Mammary epithelial cell (primary cell): ENCODE measurements at regions of chr6 and their contacts with region 1.

Region 1: DNA sequence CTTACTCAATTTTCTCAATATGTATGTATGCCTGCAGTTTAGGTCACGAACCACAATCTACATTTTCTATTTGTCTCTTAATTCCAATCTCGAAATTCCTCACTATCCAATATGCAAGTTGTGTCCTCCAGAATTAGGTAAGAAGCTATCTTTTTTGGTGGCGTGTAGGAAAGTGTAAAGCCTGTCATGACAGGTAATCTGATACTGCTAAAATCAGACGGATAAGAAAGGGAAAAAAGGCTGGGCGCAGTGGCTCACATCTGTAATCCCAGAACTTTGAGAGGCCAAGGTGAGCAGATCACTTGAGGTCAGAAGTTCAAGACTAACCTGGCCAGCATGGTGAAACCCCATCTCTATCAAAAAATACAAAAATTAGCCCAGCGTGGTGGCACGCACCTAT is 185.3 kb downstream of the IBTK start:
- DNase-seq: no peak
- H3K4me3 ChIP-seq: no peak overlapping the region
- H3K27ac ChIP-seq: no peak overlapping the region
- H3K4me1 ChIP-seq: peaks cover 8% of the 10 kb centered on the region
- H3K27me3 ChIP-seq: no peaks in the 10 kb centered on the region
- CTCF ChIP-seq: no peak

Region 2: GRCh38 chr6:80940571-80940970 is 1121.6 kb before region 1 on chr6:
- CTCF ChIA-PET with region 1: interaction called, 15 read pairs
- dilution Hi-C with region 1: no loop called
- in situ Hi-C with region 1: no loop called
- intact Hi-C with region 1: no loop called
- DNase-seq: no peak
- H3K4me3 ChIP-seq: no peak overlapping the region
- H3K27ac ChIP-seq: no peak overlapping the region
- H3K4me1 ChIP-seq: no peaks in the 10 kb centered on the region
- H3K27me3 ChIP-seq: no peaks in the 10 kb centered on the region
- CTCF ChIP-seq: no peak